B cell (primary cell): ENCODE measurements at regions of chr1 and their contacts with region 1.

Region 1: DNA sequence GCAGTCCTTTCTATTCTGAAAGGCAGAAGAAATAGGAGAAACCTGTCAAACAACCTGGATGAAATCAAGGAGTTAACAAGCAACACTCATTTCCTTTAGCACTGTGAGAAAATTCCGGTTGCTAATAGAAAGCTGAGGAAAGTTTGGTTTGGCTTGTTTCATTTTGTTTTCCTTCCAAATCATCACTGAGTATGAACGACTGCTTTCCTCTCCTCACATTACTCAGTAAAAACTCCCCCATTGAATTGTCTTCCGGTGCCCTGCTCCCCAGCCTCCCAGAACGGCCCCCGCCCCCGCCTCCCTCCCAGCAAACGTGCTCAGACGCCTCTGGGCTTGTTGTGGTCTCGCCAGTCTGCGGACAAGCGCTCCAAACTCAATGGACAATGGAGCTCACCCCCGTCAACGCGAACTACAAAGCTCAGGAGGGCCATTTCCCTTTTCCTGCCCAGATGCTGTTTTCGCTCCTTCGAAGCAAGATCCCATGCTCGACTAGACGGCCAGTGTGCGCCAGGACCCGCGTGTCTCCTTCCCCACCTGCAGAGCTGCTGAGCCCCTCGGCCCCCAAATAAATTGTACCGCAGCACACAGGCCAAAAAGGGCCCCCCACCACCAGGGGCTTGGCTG is 747 bp downstream of the STX6 start:
- DNase-seq: peak; percentile 71
- ATAC-seq: peak; percentile 4
- H3K4me3 ChIP-seq: peak overlapping the region; percentile 79 to 95 (median 88)
- H3K4me3 Mint-ChIP-seq: peak overlapping the region; percentile 93
- H3K27ac ChIP-seq: peak overlapping the region; percentile 54 to 82
- H3K27ac Mint-ChIP-seq: peak overlapping the region; percentile 98
- H3K4me1 ChIP-seq: peaks cover 24 to 29% of the 10 kb centered on the region in 2 donors
- H3K4me1 Mint-ChIP-seq: peaks cover 41% of the 10 kb centered on the region
- H3K27me3 ChIP-seq: no peaks in the 10 kb centered on the region
- H3K27me3 Mint-ChIP-seq: no peaks in the 10 kb centered on the region
- CTCF ChIP-seq: no peak

Region 2: DNA sequence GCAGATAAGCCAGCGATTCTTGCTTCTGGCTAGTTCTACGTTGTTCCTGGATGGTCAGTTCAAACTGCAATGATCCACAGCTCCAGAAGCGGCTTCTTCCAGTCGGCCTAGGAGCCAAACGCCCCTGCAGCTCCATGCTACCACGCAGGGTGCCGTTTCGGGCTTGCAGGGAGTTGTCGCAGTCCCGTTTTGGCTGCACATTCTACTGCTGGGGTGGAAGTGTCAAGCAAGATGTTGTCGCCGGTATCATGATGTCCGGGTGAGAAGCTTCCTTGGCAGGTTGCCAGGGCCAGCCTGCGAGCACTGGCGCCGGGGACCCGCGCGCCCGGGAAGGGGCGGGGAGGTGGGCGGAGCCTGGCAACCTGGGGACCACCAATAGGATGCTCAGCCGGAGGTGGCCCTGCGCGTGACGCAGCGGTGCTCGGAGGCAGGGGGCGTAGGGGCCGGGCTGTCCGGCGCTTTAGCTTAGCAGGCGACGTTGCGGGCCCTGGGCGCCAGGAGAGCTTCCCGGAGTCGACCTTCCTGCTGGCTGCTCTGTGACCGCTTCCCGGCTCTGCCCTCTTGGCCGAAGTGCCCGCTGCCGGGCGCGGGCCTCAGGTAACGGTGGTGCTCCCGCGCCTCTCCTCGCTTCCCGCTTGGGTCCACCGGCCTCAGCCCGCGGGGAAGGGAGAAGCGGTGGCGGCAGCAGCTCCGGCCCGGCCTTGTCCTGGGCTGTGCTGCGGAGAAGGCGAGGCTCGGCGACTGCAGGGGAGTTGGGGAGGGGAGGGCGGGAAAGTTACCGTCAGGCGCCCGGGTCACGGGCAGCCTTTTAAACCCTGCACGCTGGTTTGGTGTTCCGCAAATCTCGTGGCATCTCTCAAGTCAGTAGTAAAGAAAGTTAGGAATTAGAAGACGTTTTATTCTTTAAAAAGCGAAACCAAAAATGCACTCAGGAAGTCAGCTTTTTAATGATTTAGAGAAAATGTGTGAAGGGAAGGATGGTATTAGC is 1728.3 kb before region 1 on chr1 and contains the start of gene SOAT1:
- CTCF ChIA-PET with region 1: no interaction called
- POLR2A ChIA-PET with region 1: no interaction called
- intact Hi-C with region 1: loop called (anchors 5 kb)
- DNase-seq: peak; percentile 93
- ATAC-seq: peak; percentile 99
- H3K4me3 ChIP-seq: peak within 1 kb of the TSS; percentile 89 to 99 (median 92)
- H3K4me3 Mint-ChIP-seq: peak within 1 kb of the TSS; percentile 93
- H3K27ac ChIP-seq: peak within 1 kb of the TSS; percentile 79 to 84
- H3K27ac Mint-ChIP-seq: peak within 1 kb of the TSS; percentile 82
- H3K4me1 ChIP-seq: peaks cover 27 to 39% of the 10 kb centered on the region in 2 donors
- H3K4me1 Mint-ChIP-seq: peaks cover 42% of the 10 kb centered on the region
- H3K27me3 ChIP-seq: no peaks in the 10 kb centered on the region
- H3K27me3 Mint-ChIP-seq: no peaks in the 10 kb centered on the region
- CTCF ChIP-seq: peak; percentile 31
- total RNA-seq, gene SOAT1: 25.1 and 27.1 TPM in 2 replicates

Region 3: GRCh38 chr1:180502360-180503273 is 519.3 kb before region 1 on chr1 and contains the start of gene ACBD6:
- CTCF ChIA-PET with region 1: no interaction called
- POLR2A ChIA-PET with region 1: no interaction called
- intact Hi-C with region 1: loop called (anchors 5 kb)
- DNase-seq: peak; percentile 92
- ATAC-seq: peak; percentile 82
- H3K4me3 ChIP-seq: peak within 1 kb of the TSS; percentile 69 to 97 (median 84)
- H3K4me3 Mint-ChIP-seq: peak within 1 kb of the TSS; percentile 95
- H3K27ac ChIP-seq: peak within 1 kb of the TSS; percentile 74 to 87
- H3K27ac Mint-ChIP-seq: peak within 1 kb of the TSS; percentile 98
- H3K4me1 ChIP-seq: peaks cover 13 to 19% of the 10 kb centered on the region in 2 donors
- H3K4me1 Mint-ChIP-seq: peaks cover 32% of the 10 kb centered on the region
- H3K27me3 ChIP-seq: no peaks in the 10 kb centered on the region
- H3K27me3 Mint-ChIP-seq: no peaks in the 10 kb centered on the region
- CTCF ChIP-seq: no peak
- total RNA-seq, gene ACBD6: 80.9 and 82.8 TPM in 2 replicates

Region 4: GRCh38 chr1:180814859-180815587 is 206.9 kb before region 1 on chr1:
- CTCF ChIA-PET with region 1: no interaction called
- POLR2A ChIA-PET with region 1: no interaction called
- intact Hi-C with region 1: no loop called
- DNase-seq: no peak
- ATAC-seq: no peak
- H3K4me3 ChIP-seq: no peak overlapping the region
- H3K4me3 Mint-ChIP-seq: no peak overlapping the region
- H3K27ac ChIP-seq: no peak overlapping the region
- H3K27ac Mint-ChIP-seq: no peak overlapping the region
- H3K4me1 ChIP-seq: no peaks in the 10 kb centered on the region
- H3K4me1 Mint-ChIP-seq: no peaks in the 10 kb centered on the region
- H3K27me3 ChIP-seq: no peaks in the 10 kb centered on the region
- H3K27me3 Mint-ChIP-seq: no peaks in the 10 kb centered on the region
- CTCF ChIP-seq: no peak

Region 5: GRCh38 chr1:180954005-180954800 is 67.7 kb before region 1 on chr1:
- CTCF ChIA-PET with region 1: no interaction called
- POLR2A ChIA-PET with region 1: interaction called, 3 read pairs
- intact Hi-C with region 1: loop called (anchors 5 kb)
- DNase-seq: peak; percentile 80
- ATAC-seq: peak; percentile 90
- H3K4me3 ChIP-seq: peak overlapping the region in 4 of 5 experiments; percentile 43 to 73 (median 68)
- H3K4me3 Mint-ChIP-seq: peak overlapping the region; percentile 73
- H3K27ac ChIP-seq: peak overlapping the region in 1 of 2 donors; percentile 9
- H3K27ac Mint-ChIP-seq: no peak overlapping the region
- H3K4me1 ChIP-seq: peaks cover 7 to 11% of the 10 kb centered on the region in 2 donors
- H3K4me1 Mint-ChIP-seq: peaks cover 5% of the 10 kb centered on the region
- H3K27me3 ChIP-seq: no peaks in the 10 kb centered on the region
- H3K27me3 Mint-ChIP-seq: no peaks in the 10 kb centered on the region
- CTCF ChIP-seq: no peak

Region 6: GRCh38 chr1:181033799-181034451 is 12.0 kb after region 1 on chr1 and contains the start of gene MR1:
- CTCF ChIA-PET with region 1: interaction called, 14 read pairs
- POLR2A ChIA-PET with region 1: interaction called, 15 read pairs
- intact Hi-C with region 1: loop called (anchors 1 kb)
- DNase-seq: peak; percentile 92
- ATAC-seq: peak; percentile 97
- H3K4me3 ChIP-seq: peak within 1 kb of the TSS; percentile 77 to 94 (median 90)
- H3K4me3 Mint-ChIP-seq: peak within 1 kb of the TSS; percentile 95
- H3K27ac ChIP-seq: peak within 1 kb of the TSS; percentile 94 to 96
- H3K27ac Mint-ChIP-seq: peak within 1 kb of the TSS; percentile 93
- H3K4me1 ChIP-seq: peaks cover 39 to 49% of the 10 kb centered on the region in 2 donors
- H3K4me1 Mint-ChIP-seq: peaks cover 54% of the 10 kb centered on the region
- H3K27me3 ChIP-seq: no peaks in the 10 kb centered on the region
- H3K27me3 Mint-ChIP-seq: no peaks in the 10 kb centered on the region
- CTCF ChIP-seq: no peak
- total RNA-seq, gene MR1: 26.1 and 28.2 TPM in 2 replicates

Region 7: DNA sequence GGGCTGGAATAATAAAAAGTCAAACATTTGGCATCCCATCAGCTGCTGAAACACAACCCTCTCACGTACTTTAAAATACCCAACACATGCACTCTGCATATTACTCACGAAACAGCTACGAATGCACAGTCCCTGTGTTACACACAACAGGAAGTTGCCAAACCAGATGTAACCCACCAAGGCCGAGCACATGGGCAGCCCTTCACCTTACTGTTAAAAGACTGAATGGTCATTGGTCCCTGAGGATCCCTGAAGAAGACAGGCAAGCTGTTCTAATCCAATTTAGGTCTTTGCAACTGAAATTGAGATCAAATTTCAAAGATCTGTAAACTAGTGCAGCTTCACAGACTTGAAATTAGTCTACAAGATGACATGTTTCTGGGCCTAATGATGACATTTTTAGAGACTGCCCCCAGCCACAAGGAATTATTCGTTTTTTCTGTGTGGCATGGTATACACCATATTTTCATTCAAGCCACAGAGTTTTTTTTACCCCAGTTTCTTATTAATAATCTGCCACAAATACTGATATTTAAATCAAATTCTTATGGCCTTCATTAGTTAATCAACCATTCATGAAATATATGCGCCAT is 41.0 kb after region 1 on chr1:
- CTCF ChIA-PET with region 1: no interaction called
- POLR2A ChIA-PET with region 1: interaction called, 5 read pairs
- intact Hi-C with region 1: loop called (anchors 2 kb)
- DNase-seq: no peak
- ATAC-seq: peak; percentile 53
- H3K4me3 ChIP-seq: peak overlapping the region in 4 of 5 experiments; percentile 15 to 53 (median 38)
- H3K4me3 Mint-ChIP-seq: peak overlapping the region; percentile 81
- H3K27ac ChIP-seq: peak overlapping the region; percentile 76 to 78
- H3K27ac Mint-ChIP-seq: peak overlapping the region; percentile 95
- H3K4me1 ChIP-seq: peaks cover 19 to 27% of the 10 kb centered on the region in 2 donors
- H3K4me1 Mint-ChIP-seq: peaks cover 31% of the 10 kb centered on the region
- H3K27me3 ChIP-seq: no peaks in the 10 kb centered on the region
- H3K27me3 Mint-ChIP-seq: no peaks in the 10 kb centered on the region
- CTCF ChIP-seq: no peak

Region 8: GRCh38 chr1:181152892-181153633 is 131.1 kb after region 1 on chr1:
- CTCF ChIA-PET with region 1: interaction called, 3 read pairs
- POLR2A ChIA-PET with region 1: interaction called, 13 read pairs
- intact Hi-C with region 1: no loop called
- DNase-seq: peak; percentile 80
- ATAC-seq: peak; percentile 87
- H3K4me3 ChIP-seq: no peak overlapping the region
- H3K4me3 Mint-ChIP-seq: peak overlapping the region; percentile 54
- H3K27ac ChIP-seq: no peak overlapping the region
- H3K27ac Mint-ChIP-seq: peak overlapping the region; percentile 39
- H3K4me1 ChIP-seq: peaks cover 35 to 45% of the 10 kb centered on the region in 2 donors
- H3K4me1 Mint-ChIP-seq: peaks cover 49% of the 10 kb centered on the region
- H3K27me3 ChIP-seq: no peaks in the 10 kb centered on the region
- H3K27me3 Mint-ChIP-seq: no peaks in the 10 kb centered on the region
- CTCF ChIP-seq: peak; percentile 56